IMR-90 (cell line): ENCODE measurements at regions of chr14 and their contacts with region 1.

Region 1: GRCh38 chr14:74478996-74479635 is 14.0 kb downstream of the NPC2 start:
- DNase-seq: peak; percentile 42
- ATAC-seq: peak; percentile 53
- H3K4me3 ChIP-seq: no peak overlapping the region
- H3K27ac ChIP-seq: no peak overlapping the region
- H3K4me1 ChIP-seq: peaks cover 11% of the 10 kb centered on the region
- H3K27me3 ChIP-seq: no peaks in the 10 kb centered on the region
- CTCF ChIP-seq: peak; percentile 93
- POLR2A ChIP-seq: no peak
- RAD21 ChIP-seq: peak; percentile 95

Region 2: DNA sequence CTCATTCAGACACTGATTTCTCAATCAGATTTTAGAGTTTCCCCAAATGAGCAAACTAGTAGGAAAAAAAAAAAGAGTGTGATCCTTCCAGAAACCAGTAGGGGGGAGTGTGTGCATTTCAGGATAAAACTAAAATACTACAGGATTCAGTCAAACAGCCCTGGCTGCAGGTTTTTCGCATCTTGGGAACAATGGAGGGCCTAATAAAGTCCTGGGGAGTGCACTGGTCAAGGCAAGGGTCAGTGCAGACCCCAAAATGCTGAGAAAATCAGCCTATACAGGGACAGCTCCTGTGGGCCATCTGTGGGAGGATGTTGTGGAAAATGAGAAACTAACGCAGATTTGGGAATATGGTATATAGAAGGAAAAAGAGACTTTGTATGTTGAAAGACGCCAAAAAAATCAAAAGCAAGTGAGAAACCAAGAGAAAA is 154.2 kb before region 1 on chr14:
- CTCF ChIA-PET with region 1: interaction called, 5 read pairs
- POLR2A ChIA-PET with region 1: no interaction called
- dilution Hi-C with region 1: no loop called
- in situ Hi-C with region 1: no loop called
- intact Hi-C with region 1: loop called (anchors 1 kb)
- DNase-seq: peak; percentile 38
- ATAC-seq: peak; percentile 78
- H3K4me3 ChIP-seq: no peak overlapping the region
- H3K27ac ChIP-seq: no peak overlapping the region
- H3K4me1 ChIP-seq: peaks cover 5% of the 10 kb centered on the region; the same call in 1 of the 2 replicates
- H3K27me3 ChIP-seq: peaks cover 27% of the 10 kb centered on the region
- CTCF ChIP-seq: peak; percentile 64
- POLR2A ChIP-seq: no peak
- RAD21 ChIP-seq: peak; percentile 43